Activated T-helper 2 cell treated with anti-CD3 and anti-CD28 coated beads, Interferon-gamma antibody, Interleukin-2, Interleukin-4, amounts not matched to agents 10 μg/mL and 5 μg/mL and 100 μg/mL, durations not matched to agents 14 hours and 24 hours and 36 hours (primary cell): ENCODE measurements at regions of chr3 and their contacts with region 1.

Region 1: GRCh38 chr3:122679085-122679881 is 1.4 kb upstream of the PARP14 start:
- DNase-seq: peak; percentile 77
- H3K4me3 Mint-ChIP-seq: peak overlapping the region; percentile 94
- H3K27ac Mint-ChIP-seq: peak overlapping the region; percentile 98
- H3K4me1 Mint-ChIP-seq: peaks cover 53% of the 10 kb centered on the region
- H3K27me3 Mint-ChIP-seq: no peaks in the 10 kb centered on the region

Region 2: DNA sequence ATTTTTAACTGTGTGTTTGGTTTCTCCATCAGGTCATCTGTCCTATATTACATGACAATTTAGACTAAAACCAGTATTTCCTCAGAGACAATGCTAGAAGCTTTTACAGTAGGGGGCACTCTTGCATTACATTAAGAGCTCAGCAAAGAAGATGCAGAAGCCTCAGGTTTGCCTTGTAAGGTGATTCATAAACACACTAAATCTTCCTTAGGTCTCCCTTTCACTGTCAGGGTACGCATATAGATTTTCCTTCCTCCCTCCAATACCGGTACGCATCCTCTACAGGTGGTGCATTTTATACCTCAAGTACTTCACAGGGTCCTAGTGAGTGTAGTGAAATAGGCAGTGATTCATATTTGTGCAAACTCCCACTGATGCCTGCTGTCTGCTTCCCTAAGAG is 577.6 kb before region 1 on chr3:
- intact Hi-C with region 1: loop called (anchors 1 kb)
- DNase-seq: no peak
- H3K4me3 Mint-ChIP-seq: no peak overlapping the region
- H3K27ac Mint-ChIP-seq: peak overlapping the region; percentile 62
- H3K4me1 Mint-ChIP-seq: peaks cover 38% of the 10 kb centered on the region
- H3K27me3 Mint-ChIP-seq: no peaks in the 10 kb centered on the region

Region 3: DNA sequence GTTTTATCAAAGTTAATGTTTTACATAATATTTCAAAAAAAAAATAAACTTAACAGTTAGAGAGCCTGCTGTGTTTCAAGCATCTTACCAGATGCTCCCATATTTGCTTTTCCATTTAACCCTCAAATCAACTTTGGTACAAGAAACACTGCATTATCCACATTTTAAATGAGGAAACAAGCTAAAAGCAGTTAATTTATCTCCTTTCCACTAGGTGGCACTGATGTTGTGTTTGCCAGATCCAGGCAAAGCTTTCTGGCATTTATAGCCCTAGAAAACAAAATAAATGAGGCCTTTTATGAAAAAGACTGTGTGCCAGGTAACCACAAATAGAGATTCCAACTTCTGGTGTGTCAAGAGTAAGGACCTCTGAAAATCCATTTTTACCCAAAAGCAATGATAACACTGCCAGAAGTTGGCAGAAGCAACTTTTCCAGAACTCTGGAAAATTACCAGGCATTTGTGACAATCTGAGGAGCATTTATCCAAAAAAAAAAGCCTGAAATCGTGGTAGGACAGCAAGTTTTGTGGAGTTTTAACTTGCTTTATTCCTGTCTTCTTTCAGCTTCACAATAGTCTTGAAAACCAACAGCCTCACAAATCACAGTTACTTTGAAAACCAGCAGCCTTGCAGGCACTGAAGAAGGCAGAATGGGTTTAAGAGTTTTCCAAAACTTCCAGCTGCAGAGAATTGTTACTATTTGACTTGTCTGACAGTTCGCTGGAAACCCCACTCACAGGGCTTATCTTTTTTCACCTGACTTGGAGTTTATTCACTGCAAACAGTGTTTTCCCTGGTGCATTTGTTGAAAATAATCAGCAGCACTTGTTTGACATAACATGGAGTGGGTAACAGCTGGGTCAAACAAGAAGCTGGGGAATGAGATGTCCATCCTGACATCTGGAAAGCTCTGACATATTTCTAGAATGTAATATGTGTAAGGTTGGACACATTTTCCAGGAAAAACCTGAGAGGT is 286.1 kb before region 1 on chr3:
- intact Hi-C with region 1: loop called (anchors 2 kb)
- DNase-seq: no peak
- H3K4me3 Mint-ChIP-seq: no peak overlapping the region
- H3K27ac Mint-ChIP-seq: no peak overlapping the region
- H3K4me1 Mint-ChIP-seq: peaks cover 54% of the 10 kb centered on the region
- H3K27me3 Mint-ChIP-seq: no peaks in the 10 kb centered on the region

Region 4: GRCh38 chr3:122576174-122576940 is 102.9 kb before region 1 on chr3:
- intact Hi-C with region 1: loop called (anchors 5 kb)
- DNase-seq: no peak
- H3K4me3 Mint-ChIP-seq: peak overlapping the region; percentile 35
- H3K27ac Mint-ChIP-seq: peak overlapping the region; percentile 88
- H3K4me1 Mint-ChIP-seq: peaks cover 44% of the 10 kb centered on the region
- H3K27me3 Mint-ChIP-seq: no peaks in the 10 kb centered on the region

Region 5: DNA sequence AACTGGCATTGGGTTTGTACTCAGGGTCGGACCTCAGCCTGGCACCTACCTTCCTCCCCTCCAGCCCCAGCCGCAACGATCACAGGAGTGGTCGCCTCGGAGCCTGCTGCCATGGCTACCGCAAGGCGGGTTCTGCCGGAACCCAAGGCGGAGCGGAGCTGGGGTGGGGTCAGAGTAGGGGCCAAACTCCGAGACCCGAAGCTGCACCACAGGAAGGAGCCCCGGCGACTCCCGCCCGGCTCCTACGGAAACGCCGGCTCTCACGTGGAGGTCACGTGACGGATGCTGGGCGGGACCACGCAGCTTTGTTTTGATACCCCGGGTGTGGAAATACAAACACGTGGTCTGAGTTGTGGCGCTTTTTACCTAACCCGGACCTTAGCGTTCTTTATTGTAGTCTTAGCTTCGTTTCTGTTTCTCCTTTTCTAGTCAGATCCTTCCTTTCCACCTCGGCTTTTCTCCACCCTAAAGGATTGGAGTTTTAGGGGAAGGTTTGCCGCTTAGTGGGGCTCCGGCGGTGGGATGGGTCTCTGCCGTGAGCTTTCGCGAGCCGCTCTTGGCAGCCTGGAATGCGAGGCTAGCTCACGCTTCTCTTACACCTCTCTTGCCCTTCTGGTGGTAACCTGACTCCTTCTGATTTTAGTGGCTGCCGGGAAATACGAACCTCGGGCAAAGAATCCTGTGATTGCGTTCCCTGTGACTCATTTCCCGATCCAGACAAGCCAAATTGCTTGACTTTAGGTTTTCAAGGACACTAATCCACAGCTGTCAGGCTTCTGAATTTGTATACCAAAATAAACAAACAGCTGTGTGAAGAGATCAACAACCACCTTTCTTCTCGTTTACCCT is 114.5 kb after region 1 on chr3 and contains the start of gene HSPBAP1:
- intact Hi-C with region 1: loop called (anchors 5 kb)
- DNase-seq: peak; percentile 87
- H3K4me3 Mint-ChIP-seq: peak within 1 kb of the TSS; percentile 88
- H3K27ac Mint-ChIP-seq: peak within 1 kb of the TSS; percentile 77
- H3K4me1 Mint-ChIP-seq: peaks cover 32% of the 10 kb centered on the region
- H3K27me3 Mint-ChIP-seq: peaks cover 3% of the 10 kb centered on the region
- total RNA-seq, gene HSPBAP1: 6.6 and 8.0 TPM in 2 replicates